ENCODE measurements at regions of chr11 and their contacts with region 1.

Region 1: DNA sequence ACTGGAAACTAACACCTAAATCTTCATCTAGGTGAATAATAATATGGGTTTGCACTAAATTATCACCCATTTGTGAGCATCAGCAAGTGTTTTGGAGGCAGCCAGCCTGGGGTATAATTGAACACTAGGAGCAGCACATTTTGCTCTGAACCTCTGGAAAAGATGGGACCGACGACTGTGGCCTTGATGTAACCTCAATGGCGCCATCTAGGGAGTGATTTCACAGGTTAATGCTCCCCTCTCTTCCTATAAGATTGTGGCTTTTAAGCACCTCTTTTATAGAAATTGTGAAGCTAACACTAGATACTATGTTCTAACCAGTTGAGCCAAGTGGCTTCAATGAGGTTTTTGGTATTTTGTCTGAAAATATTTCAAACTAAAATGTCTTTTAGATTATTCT is 203.7 kb downstream of the NELL1 start:
- DNase-seq: peak; percentile 41 to 66
- H3K4me3 ChIP-seq: no peak overlapping the region
- H3K27ac ChIP-seq: no peak overlapping the region
- H3K4me1 ChIP-seq: peaks cover 0 to 3% (median 1%) of the 10 kb centered on the region in 4 experiments; a peak in 2 of 7 replicates
- H3K27me3 ChIP-seq: no peaks in the 10 kb centered on the region
- CTCF ChIP-seq: peak; percentile 52 to 91 (median 83)
- EP300 ChIP-seq: no peak
- POLR2A ChIP-seq: no peak
- RAD21 ChIP-seq: peak; percentile 79 to 85

Region 2: GRCh38 chr11:20658135-20658534 is 214.9 kb before region 1 on chr11:
- CTCF ChIA-PET with region 1: interaction called, 18 read pairs
- POLR2A ChIA-PET with region 1: no interaction called
- DNase-seq: no peak
- H3K4me3 ChIP-seq: no peak overlapping the region
- H3K27ac ChIP-seq: no peak overlapping the region
- H3K4me1 ChIP-seq: peaks cover 0 to 7% (median 5%) of the 10 kb centered on the region in 4 experiments; a peak in 5 of 7 replicates
- H3K27me3 ChIP-seq: no peaks in the 10 kb centered on the region
- CTCF ChIP-seq: no peak
- EP300 ChIP-seq: no peak
- POLR2A ChIP-seq: no peak
- RAD21 ChIP-seq: no peak

Region 3: GRCh38 chr11:20840341-20840740 is 32.7 kb before region 1 on chr11:
- CTCF ChIA-PET with region 1: no interaction called
- POLR2A ChIA-PET with region 1: no interaction called
- DNase-seq: no peak
- H3K4me3 ChIP-seq: no peak overlapping the region
- H3K27ac ChIP-seq: no peak overlapping the region
- H3K4me1 ChIP-seq: no peaks in the 10 kb centered on the region; a peak in 1 of 7 replicates
- H3K27me3 ChIP-seq: no peaks in the 10 kb centered on the region
- CTCF ChIP-seq: no peak
- EP300 ChIP-seq: no peak
- POLR2A ChIP-seq: no peak
- RAD21 ChIP-seq: no peak

Region 4: GRCh38 chr11:20854215-20854955 is 18.7 kb before region 1 on chr11:
- CTCF ChIA-PET with region 1: interaction called, 18 read pairs
- POLR2A ChIA-PET with region 1: no interaction called
- DNase-seq: no peak
- H3K4me3 ChIP-seq: no peak overlapping the region
- H3K27ac ChIP-seq: no peak overlapping the region
- H3K4me1 ChIP-seq: no peaks in the 10 kb centered on the region
- H3K27me3 ChIP-seq: no peaks in the 10 kb centered on the region
- CTCF ChIP-seq: no peak
- EP300 ChIP-seq: no peak
- POLR2A ChIP-seq: no peak
- RAD21 ChIP-seq: no peak

Region 5: GRCh38 chr11:20912922-20913512 is 40.0 kb after region 1 on chr11:
- CTCF ChIA-PET with region 1: interaction called, 15 read pairs
- POLR2A ChIA-PET with region 1: interaction called, 3 read pairs
- DNase-seq: no peak
- H3K4me3 ChIP-seq: peak overlapping the region in 1 of 4 experiments; percentile 37; a peak in 1 of 8 replicates
- H3K27ac ChIP-seq: no peak overlapping the region
- H3K4me1 ChIP-seq: peaks cover 0 to 16% (median 6%) of the 10 kb centered on the region in 4 experiments; a peak in 4 of 7 replicates
- H3K27me3 ChIP-seq: no peaks in the 10 kb centered on the region
- CTCF ChIP-seq: no peak
- EP300 ChIP-seq: no peak
- POLR2A ChIP-seq: no peak
- RAD21 ChIP-seq: no peak

Measured in H1 (cell line).